HepG2 (cell line): ENCODE measurements at regions of chr16 and their contacts with region 1.

Region 1: DNA sequence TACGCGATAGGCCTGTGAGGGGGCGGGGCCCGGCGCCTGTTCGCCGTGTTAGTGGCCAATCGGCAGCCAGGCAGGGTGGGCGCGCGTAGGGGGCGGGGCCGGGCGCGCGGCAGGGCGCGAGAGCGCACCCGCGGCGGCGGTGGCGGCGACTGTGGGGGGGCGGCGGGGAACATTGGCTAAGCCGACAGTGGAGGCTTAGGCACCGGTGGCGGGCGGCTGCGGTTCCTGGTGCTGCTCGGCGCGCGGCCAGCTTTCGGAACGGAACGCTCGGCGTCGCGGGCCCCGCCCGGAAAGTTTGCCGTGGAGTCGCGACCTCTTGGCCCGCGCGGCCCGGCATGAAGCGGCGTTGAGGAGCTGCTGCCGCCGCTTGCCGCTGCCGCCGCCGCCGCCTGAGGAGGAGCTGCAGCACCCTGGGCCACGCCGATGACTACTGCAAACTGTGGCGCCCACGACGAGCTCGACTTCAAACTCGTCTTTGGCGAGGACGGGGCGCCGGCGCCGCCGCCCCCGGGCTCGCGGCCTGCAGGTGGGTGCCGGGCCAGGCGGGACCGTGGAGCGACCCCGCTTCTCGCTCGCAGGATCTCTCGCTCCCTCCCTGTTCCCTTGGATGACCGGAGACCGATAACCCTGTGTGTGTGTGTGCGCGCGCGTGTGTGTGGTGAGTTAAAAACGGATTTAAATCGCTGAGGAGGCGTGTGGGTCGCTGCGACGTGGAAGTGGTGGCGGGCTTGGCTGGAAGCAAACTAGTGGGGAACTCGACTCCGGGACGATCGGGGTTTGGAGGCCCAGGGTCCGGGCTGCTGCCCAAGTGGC is at the start of gene NFATC3:
- DNase-seq: peak; percentile 96
- ATAC-seq: peak; percentile 50
- H3K4me3 ChIP-seq: peak within 1 kb of the TSS; percentile 90 to 98 (median 96)
- H3K27ac ChIP-seq: peak within 1 kb of the TSS; percentile 99
- H3K4me1 ChIP-seq: peaks cover 67% of the 10 kb centered on the region
- H3K27me3 ChIP-seq: no peaks in the 10 kb centered on the region; a peak in 1 of 5 replicates
- CTCF ChIP-seq: no peak
- EP300 ChIP-seq: peak in 1 of 2 experiments; percentile 6; a peak in 1 of 4 replicates
- POLR2A ChIP-seq: peak in 1 of 2 experiments; percentile 61; a peak in 2 of 4 replicates
- RAD21 ChIP-seq: peak; percentile 70
- total RNA-seq, gene NFATC3: 52.6 and 63.2 TPM in 2 replicates

Region 2: GRCh38 chr16:67833418-67834241 is 251.8 kb before region 1 on chr16:
- CTCF ChIA-PET with region 1: no interaction called
- POLR2A ChIA-PET with region 1: interaction called, 10 read pairs
- in situ Hi-C with region 1: no loop called
- intact Hi-C with region 1: no loop called
- DNase-seq: peak; percentile 89
- ATAC-seq: peak; percentile 98
- H3K4me3 ChIP-seq: peak overlapping the region; percentile 75 to 91 (median 75)
- H3K27ac ChIP-seq: peak overlapping the region; percentile 59
- H3K4me1 ChIP-seq: peaks cover 37% of the 10 kb centered on the region
- H3K27me3 ChIP-seq: no peaks in the 10 kb centered on the region; a peak in 1 of 5 replicates
- CTCF ChIP-seq: no peak; the same call in 1 of the 2 replicates
- EP300 ChIP-seq: 0 out of 4 replicates have a peak, but pooled peaks of 1 of the 2 experiments have one; percentile 41
- POLR2A ChIP-seq: peak; percentile 92 to 99
- RAD21 ChIP-seq: peak; percentile 36; the same call in 1 of the 2 replicates

Region 3: DNA sequence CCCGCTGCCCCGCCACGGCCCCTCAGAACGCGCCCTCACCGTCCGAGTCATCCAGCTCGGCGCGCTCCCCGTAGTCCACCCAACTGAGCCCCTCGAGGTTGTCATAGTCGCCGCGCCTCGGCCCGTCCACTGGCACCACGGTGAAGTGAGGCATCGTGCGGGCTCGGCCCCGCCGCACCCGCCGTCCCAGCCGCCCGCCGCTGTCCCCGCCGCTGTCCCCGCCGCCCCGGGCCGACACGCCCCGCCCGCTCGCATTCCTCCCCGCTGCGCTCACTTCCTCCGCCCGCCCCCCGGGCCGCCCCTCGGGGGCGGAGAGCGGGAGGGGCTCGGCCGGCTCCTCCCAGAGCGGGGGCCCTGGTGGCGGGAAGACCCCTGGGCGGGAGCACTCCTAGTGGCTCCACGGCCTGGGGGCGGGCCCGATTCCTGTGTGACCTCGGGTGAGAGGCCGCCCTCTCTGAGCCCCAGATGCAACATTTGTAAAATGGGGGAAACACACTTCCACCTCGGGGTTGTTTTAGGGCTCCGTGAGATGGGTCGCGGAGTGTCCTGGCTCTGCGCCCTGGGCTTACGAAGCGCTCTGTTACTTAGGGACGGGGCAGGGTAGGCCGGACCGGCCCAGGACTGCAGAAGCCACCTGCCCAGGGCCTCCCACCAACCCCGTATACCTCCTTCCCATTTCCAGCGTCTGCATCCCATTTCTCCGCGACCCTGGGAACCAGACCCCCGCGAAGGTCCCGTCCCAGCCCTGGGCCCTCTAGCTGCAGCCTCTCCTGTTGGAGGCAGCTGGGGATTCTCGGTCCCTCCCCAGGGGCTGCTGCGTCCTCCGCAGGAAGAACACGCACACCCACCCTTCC is 116.8 kb before region 1 on chr16 and contains the start of gene SLC12A4:
- CTCF ChIA-PET with region 1: no interaction called
- POLR2A ChIA-PET with region 1: interaction called, 13 read pairs
- in situ Hi-C with region 1: no loop called
- intact Hi-C with region 1: no loop called
- DNase-seq: peak; percentile 86
- ATAC-seq: peak; percentile 73
- H3K4me3 ChIP-seq: peak within 1 kb of the TSS; percentile 89 to 91 (median 90)
- H3K27ac ChIP-seq: peak within 1 kb of the TSS; percentile 92
- H3K4me1 ChIP-seq: peaks cover 57% of the 10 kb centered on the region
- H3K27me3 ChIP-seq: no peaks in the 10 kb centered on the region; a peak in 1 of 5 replicates
- CTCF ChIP-seq: peak; percentile 13; the same call in 1 of the 2 replicates
- EP300 ChIP-seq: peak in 1 of 2 experiments; percentile 73; a peak in 1 of 4 replicates
- POLR2A ChIP-seq: peak; percentile 66 to 81
- RAD21 ChIP-seq: peak; percentile 5; the same call in 1 of the 2 replicates
- total RNA-seq, gene SLC12A4: 23.1 and 65.1 TPM in 2 replicates

Region 4: DNA sequence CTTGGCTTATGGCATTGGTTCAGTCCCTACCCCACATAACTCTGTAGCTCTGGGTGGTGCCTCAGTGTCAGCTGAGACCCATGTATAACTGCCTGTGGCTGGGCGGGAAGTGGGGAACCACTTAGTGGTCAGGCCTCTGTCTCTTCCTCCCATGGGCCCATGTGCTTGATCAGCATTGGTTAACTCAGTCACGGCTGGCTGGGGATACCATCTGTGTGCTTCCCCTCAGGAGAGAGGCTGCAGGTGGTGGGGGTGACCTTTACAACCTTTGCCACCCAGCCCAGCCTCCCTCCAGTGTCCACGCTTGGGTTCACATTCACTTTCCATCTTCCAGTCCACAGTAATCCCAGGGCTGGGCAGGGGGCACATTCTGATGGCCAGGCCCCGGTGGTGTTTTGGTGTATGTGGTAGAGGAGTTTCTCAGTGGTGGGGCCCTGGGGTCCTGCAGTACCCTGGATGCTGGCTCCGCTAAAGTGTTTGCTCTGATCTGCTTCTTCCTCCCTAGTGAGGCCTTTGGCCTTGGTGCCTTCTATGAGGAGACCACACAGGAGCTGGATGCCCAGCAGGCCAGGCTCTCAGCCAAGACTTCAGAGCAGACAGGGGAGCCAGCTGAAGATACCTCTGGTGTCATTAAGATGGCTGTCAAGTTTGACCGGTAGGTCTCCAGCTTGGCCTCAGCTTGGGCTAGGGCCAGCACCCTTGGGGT is 10.5 kb before region 1 on chr16:
- CTCF ChIA-PET with region 1: no interaction called
- POLR2A ChIA-PET with region 1: interaction called, 24 read pairs
- in situ Hi-C with region 1: no loop called
- intact Hi-C with region 1: no loop called
- DNase-seq: no peak
- ATAC-seq: no peak
- H3K4me3 ChIP-seq: no peak overlapping the region
- H3K27ac ChIP-seq: peak overlapping the region; percentile 8
- H3K4me1 ChIP-seq: peaks cover 40% of the 10 kb centered on the region
- H3K27me3 ChIP-seq: no peaks in the 10 kb centered on the region
- CTCF ChIP-seq: no peak
- EP300 ChIP-seq: no peak
- POLR2A ChIP-seq: no peak
- RAD21 ChIP-seq: no peak

Region 5: DNA sequence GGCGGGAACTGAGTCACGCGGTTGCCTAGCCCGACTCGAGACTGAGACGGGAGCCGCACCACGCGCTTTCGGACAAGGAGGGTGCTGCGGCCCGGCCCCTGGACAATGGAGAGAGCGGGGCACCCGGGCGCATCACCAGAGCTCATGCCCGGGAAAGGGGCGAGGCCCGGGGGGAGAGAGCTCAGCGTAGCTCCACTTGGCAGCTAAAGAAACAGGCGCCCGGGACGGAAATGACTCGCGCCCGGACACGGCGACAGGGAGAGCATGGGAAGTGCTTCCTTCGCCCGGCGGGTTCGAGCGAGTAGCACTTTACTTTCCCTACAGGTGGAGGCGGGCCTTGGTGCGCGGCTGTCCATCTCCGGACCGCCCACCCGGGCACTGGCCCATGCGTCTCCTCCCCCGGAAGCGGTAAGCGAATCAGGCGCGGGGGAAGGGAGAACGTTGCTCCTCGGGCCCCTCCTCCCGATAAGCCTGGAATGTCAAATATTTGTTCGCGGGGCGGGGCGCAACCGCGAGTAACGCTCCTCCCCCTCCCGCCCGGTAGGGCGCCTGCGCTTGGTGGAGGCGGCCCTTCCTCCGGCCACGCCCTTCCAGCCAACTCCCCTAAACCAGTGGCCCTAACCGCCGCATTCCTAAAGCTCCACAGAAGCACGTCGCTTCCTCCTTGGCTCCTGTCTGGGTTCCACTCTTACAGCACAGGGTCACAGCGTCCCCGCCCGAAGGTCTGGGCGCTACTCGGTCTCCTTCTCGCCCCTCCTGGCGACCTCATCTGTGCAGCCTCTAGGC is 152.0 kb after region 1 on chr16:
- CTCF ChIA-PET with region 1: no interaction called
- POLR2A ChIA-PET with region 1: interaction called, 100 read pairs
- in situ Hi-C with region 1: loop called (anchors 10 kb)
- intact Hi-C with region 1: no loop called
- DNase-seq: peak; percentile 98
- ATAC-seq: peak; percentile 71
- H3K4me3 ChIP-seq: peak overlapping the region; percentile 66 to 94 (median 93)
- H3K27ac ChIP-seq: peak overlapping the region; percentile 85
- H3K4me1 ChIP-seq: peaks cover 38% of the 10 kb centered on the region
- H3K27me3 ChIP-seq: no peaks in the 10 kb centered on the region; a peak in 1 of 5 replicates
- CTCF ChIP-seq: peak; percentile 10; the same call in 1 of the 2 replicates
- EP300 ChIP-seq: peak; percentile 77 to 92
- POLR2A ChIP-seq: peak in 1 of 2 experiments; percentile 91; a peak in 2 of 4 replicates
- RAD21 ChIP-seq: peak; percentile 28; the same call in 1 of the 2 replicates